ENCODE measurements at regions of chr16 and their contacts with region 1.

Region 1: DNA sequence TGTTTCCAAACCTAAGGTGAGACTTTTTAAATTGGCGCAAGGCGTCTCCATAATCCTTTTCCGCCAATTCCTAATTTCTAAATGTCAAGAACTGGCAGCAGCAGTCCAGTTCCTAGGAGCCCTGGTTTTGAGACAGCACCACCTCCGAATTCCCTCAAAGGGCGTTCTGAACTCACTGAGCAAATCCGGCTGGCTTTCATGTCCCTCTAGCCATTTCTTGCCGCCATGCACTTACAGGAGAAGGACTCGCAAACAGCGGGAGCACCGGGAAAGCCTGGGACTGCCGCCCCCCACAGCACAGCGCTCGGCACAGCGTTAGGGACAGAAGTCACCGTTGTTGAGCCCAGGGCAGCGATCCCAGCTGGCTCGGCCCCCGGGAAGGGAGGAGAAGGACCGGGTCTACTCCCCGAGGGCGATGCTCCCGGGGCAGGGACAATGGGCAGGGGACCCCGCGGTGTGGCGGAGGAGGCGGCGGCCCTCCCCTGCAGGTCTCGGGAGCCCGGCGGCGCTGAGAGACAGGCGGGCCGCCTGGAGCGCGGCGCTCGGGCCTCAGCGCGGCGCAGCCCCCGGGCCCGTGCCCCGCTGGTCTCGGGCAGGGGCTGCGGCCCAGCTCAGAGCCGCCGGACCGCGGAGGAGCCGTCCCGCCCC is 545 bp downstream of the ARHGAP17 start:
- DNase-seq: no peak
- ATAC-seq: peak; percentile 9
- H3K4me3 ChIP-seq: peak overlapping the region; percentile 98
- H3K27ac ChIP-seq: peak overlapping the region; percentile 94
- H3K4me1 ChIP-seq: peaks cover 43% of the 10 kb centered on the region
- H3K27me3 ChIP-seq: no peaks in the 10 kb centered on the region
- CTCF ChIP-seq: no peak
- EP300 ChIP-seq: no peak
- POLR2A ChIP-seq: no peak
- RAD21 ChIP-seq: no peak

Region 2: GRCh38 chr16:24988593-24989338 is 25.9 kb before region 1 on chr16:
- CTCF ChIA-PET with region 1: interaction called, 5 read pairs
- POLR2A ChIA-PET with region 1: interaction called, 8 read pairs
- RAD21 ChIA-PET with region 1: interaction called, 6 read pairs
- SMC1A ChIA-PET with region 1: interaction called, 57 read pairs
- in situ Hi-C with region 1: no loop called
- intact Hi-C with region 1: no loop called
- DNase-seq: no peak
- ATAC-seq: peak; percentile 32
- H3K4me3 ChIP-seq: no peak overlapping the region
- H3K27ac ChIP-seq: no peak overlapping the region
- H3K4me1 ChIP-seq: peaks cover 51% of the 10 kb centered on the region
- H3K27me3 ChIP-seq: no peaks in the 10 kb centered on the region
- CTCF ChIP-seq: no peak
- EP300 ChIP-seq: no peak
- POLR2A ChIP-seq: no peak
- RAD21 ChIP-seq: no peak

Region 3: GRCh38 chr16:25038239-25038954 is 23.8 kb after region 1 on chr16:
- CTCF ChIA-PET with region 1: interaction called, 39 read pairs
- POLR2A ChIA-PET with region 1: interaction called, 118 read pairs
- RAD21 ChIA-PET with region 1: interaction called, 22 read pairs
- SMC1A ChIA-PET with region 1: interaction called, 161 read pairs
- in situ Hi-C with region 1: no loop called
- intact Hi-C with region 1: loop called (anchors 1 kb)
- DNase-seq: no peak
- ATAC-seq: peak; percentile 78
- H3K4me3 ChIP-seq: no peak overlapping the region
- H3K27ac ChIP-seq: peak overlapping the region; percentile 64
- H3K4me1 ChIP-seq: peaks cover 50% of the 10 kb centered on the region
- H3K27me3 ChIP-seq: no peaks in the 10 kb centered on the region
- CTCF ChIP-seq: no peak
- EP300 ChIP-seq: peak; percentile 74 to 85; a peak in 3 of 4 replicates
- POLR2A ChIP-seq: no peak
- RAD21 ChIP-seq: no peak

Region 4: DNA sequence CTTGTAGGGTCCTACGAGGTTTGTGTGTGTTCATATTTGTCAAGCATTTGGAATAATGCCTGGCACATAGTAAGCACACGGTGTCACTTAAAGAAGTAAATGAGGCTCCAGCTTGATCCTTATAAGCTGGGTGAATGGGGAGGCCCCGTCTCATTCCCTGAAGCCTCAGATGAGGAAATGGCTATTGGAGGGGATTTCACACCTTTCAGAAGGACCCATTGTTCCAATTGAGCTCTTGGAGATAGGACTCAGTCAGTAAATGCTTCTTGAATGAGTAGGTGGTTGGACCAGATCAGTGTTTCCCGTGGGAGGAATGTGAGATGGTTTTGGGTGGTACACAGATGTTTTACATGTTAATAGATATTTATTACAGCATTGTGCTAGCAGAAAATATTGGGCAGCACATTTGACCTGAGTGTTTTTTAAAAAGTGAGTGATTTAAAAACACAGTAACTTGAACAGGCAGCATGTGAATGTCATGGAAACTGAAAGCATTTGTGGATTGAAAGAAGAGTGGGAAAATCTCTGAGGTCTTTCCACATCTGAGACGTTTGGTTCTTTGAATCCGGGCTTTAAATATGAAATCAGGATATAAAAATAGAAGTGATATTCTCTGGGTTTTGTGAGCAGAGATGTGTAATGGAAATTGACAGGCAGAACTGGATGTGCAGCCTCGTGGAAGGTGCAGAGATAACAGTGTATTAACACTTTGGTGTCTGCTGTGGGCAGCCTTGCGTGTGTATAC is 37.0 kb after region 1 on chr16:
- CTCF ChIA-PET with region 1: interaction called, 13 read pairs
- POLR2A ChIA-PET with region 1: interaction called, 42 read pairs
- RAD21 ChIA-PET with region 1: interaction called, 30 read pairs
- SMC1A ChIA-PET with region 1: interaction called, 75 read pairs
- in situ Hi-C with region 1: no loop called
- intact Hi-C with region 1: loop called (anchors 2 kb)
- DNase-seq: no peak
- ATAC-seq: peak; percentile 13
- H3K4me3 ChIP-seq: peak overlapping the region; percentile 59; the same call in 1 of the 2 replicates
- H3K27ac ChIP-seq: peak overlapping the region; percentile 2
- H3K4me1 ChIP-seq: peaks cover 33% of the 10 kb centered on the region
- H3K27me3 ChIP-seq: no peaks in the 10 kb centered on the region
- CTCF ChIP-seq: no peak
- EP300 ChIP-seq: no peak; a peak in 1 of 4 replicates
- POLR2A ChIP-seq: no peak
- RAD21 ChIP-seq: 0 out of 2 replicates have a peak, but pooled peaks have one; percentile 1

Region 5: GRCh38 chr16:25111403-25112166 is 97.0 kb after region 1 on chr16 and contains the start of gene LCMT1:
- CTCF ChIA-PET with region 1: interaction called, 3 read pairs
- POLR2A ChIA-PET with region 1: interaction called, 4 read pairs
- RAD21 ChIA-PET with region 1: interaction called, 3 read pairs
- SMC1A ChIA-PET with region 1: interaction called, 20 read pairs
- in situ Hi-C with region 1: no loop called
- intact Hi-C with region 1: no loop called
- DNase-seq: peak; percentile 97
- ATAC-seq: peak; percentile 87
- H3K4me3 ChIP-seq: peak within 1 kb of the TSS; percentile 85
- H3K27ac ChIP-seq: peak within 1 kb of the TSS; percentile 72
- H3K4me1 ChIP-seq: peaks cover 9% of the 10 kb centered on the region; the same call in 1 of the 2 replicates
- H3K27me3 ChIP-seq: no peaks in the 10 kb centered on the region
- CTCF ChIP-seq: no peak
- EP300 ChIP-seq: no peak
- POLR2A ChIP-seq: peak; percentile 82
- RAD21 ChIP-seq: no peak
- polyA plus RNA-seq, gene LCMT1: 34.1 to 37.8 TPM

Measured in GM12878 (cell line).